ENCODE measurements at regions of chr6 and their contacts with region 1.

Region 1: GRCh38 chr6:56595490-56596122 is 47.1 kb downstream of the DST start:
- DNase-seq: peak; percentile 21
- H3K4me3 Mint-ChIP-seq: no peak overlapping the region
- H3K27ac Mint-ChIP-seq: peak overlapping the region; percentile 13
- H3K4me1 Mint-ChIP-seq: peaks cover 28% of the 10 kb centered on the region
- H3K27me3 Mint-ChIP-seq: peaks cover 2% of the 10 kb centered on the region

Region 2: GRCh38 chr6:55980627-55981211 is 614.9 kb before region 1 on chr6:
- intact Hi-C with region 1: loop called (anchors 5 kb)
- DNase-seq: no peak
- H3K4me3 Mint-ChIP-seq: no peak overlapping the region
- H3K27ac Mint-ChIP-seq: no peak overlapping the region
- H3K4me1 Mint-ChIP-seq: no peaks in the 10 kb centered on the region
- H3K27me3 Mint-ChIP-seq: no peaks in the 10 kb centered on the region

Region 3: DNA sequence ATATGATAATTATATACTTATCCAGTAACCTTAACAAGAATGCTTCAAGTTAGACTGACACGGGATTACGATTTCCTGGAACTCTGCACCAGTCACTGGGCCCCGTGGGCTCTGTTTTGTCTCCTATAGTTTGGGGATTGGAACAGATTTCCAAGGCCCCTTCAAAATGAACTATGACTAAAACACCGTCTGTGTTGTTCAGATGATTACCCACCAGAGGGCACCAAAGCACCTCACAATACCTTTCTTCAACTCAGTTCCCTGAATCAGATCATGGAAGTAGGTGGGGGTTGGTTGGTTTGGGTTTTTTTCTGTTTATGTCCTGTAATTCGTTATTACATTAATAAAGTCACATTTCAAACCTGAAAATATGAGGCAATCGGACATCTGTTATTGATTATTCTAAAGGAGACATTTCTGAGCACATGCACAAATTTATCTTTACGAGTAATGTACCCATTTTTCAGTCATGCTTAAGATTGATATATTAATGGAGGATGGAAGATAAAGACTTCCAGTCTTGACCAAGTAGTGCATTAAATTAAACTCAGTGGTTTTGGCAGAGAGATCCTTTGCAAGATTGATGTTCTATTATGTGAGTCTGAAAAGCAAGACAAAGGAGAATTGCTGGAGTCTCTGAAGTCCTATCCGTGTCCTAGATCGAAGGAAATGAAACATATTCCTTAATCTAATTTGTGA is 236.3 kb before region 1 on chr6:
- intact Hi-C with region 1: loop called (anchors 1 kb)
- DNase-seq: peak; percentile 29
- H3K4me3 Mint-ChIP-seq: no peak overlapping the region
- H3K27ac Mint-ChIP-seq: no peak overlapping the region
- H3K4me1 Mint-ChIP-seq: peaks cover 1% of the 10 kb centered on the region
- H3K27me3 Mint-ChIP-seq: peaks cover 5% of the 10 kb centered on the region

Region 4: GRCh38 chr6:56542364-56543331 is 53.0 kb before region 1 on chr6:
- intact Hi-C with region 1: loop called (anchors 2 kb)
- DNase-seq: peak; percentile 70
- H3K4me3 Mint-ChIP-seq: no peak overlapping the region
- H3K27ac Mint-ChIP-seq: no peak overlapping the region
- H3K4me1 Mint-ChIP-seq: peaks cover 2% of the 10 kb centered on the region
- H3K27me3 Mint-ChIP-seq: peaks cover 3% of the 10 kb centered on the region

Region 5: GRCh38 chr6:56570413-56571359 is 24.9 kb before region 1 on chr6:
- intact Hi-C with region 1: loop called (anchors 2 kb)
- DNase-seq: no peak
- H3K4me3 Mint-ChIP-seq: no peak overlapping the region
- H3K27ac Mint-ChIP-seq: no peak overlapping the region
- H3K4me1 Mint-ChIP-seq: no peaks in the 10 kb centered on the region
- H3K27me3 Mint-ChIP-seq: peaks cover 2% of the 10 kb centered on the region

Region 6: DNA sequence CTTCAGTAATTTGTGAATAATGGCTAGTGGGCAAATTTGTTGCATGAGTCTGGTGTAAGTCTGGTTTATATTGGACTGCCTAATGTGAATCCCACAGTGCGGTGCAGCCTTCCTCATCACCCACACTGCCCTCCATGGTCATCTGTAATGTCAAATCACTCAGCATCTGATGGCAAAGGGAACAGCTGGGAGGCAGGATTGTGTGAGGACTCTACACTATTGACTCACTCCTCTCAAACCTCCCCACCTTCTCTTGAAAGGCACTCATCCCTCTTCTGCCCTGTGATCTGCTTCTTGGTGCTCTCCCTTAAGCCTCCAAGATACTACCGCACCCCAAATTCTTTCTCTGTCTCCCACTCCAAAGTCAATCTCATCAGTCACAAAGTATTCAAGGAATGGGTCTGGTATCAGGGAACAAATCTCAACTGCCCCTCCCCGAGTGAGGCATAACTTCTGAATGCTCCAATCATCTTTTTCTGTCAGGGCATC is 213.3 kb after region 1 on chr6:
- intact Hi-C with region 1: no loop called
- DNase-seq: no peak
- H3K4me3 Mint-ChIP-seq: no peak overlapping the region
- H3K27ac Mint-ChIP-seq: no peak overlapping the region
- H3K4me1 Mint-ChIP-seq: no peaks in the 10 kb centered on the region
- H3K27me3 Mint-ChIP-seq: no peaks in the 10 kb centered on the region